PC-9 (cell line): ENCODE measurements at regions of chr7 and their contacts with region 1.

Region 1: GRCh38 chr7:22238354-22239311 is 118.3 kb downstream of the RAPGEF5 start:
- DNase-seq: no peak
- H3K4me3 ChIP-seq: no peak overlapping the region
- H3K27ac ChIP-seq: no peak overlapping the region
- H3K4me1 ChIP-seq: no peaks in the 10 kb centered on the region
- H3K27me3 ChIP-seq: no peaks in the 10 kb centered on the region
- CTCF ChIP-seq: no peak

Region 2: DNA sequence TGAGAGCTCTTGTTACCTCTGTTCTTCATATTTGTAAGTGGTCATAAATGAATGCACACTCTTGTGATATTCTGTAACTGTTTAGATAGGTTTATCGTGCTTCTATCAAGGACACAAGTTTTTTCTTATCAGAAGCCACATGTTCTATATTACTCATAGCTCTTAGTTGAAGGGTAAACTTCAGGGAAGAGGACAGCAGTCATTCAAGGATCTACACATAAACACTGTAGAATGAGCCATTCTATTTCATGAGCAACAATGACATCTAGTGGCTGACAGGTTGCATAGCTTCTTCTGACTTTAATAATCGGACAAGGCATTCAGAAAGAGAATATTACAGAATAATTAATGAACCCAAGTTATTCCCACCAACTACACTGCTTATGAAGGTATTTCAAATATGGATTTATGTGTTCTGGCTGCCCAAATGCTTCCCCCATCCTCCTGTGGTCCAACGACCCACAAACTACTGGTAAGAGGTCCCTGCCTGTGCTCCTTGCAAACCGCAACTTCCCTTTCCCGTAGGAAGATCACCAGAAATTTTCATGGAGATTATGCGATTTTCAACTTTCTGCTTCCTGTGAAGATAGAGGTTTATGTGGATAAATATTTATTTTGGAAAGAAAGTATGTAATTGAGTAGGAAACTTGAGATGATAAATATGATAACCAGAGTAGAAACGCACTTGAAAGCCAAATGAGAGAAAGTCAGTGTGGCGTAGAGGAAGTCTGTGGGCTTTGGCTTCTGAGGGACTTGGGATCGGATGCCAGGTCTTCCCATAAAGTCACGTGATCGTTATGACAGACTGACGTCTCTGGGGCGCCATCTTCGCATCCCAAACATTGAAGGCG is 1639.9 kb before region 1 on chr7:
- CTCF ChIA-PET with region 1: no interaction called
- POLR2A ChIA-PET with region 1: no interaction called
- intact Hi-C with region 1: no loop called
- DNase-seq: peak; percentile 4 to 71
- H3K4me3 ChIP-seq: no peak overlapping the region
- H3K27ac ChIP-seq: no peak overlapping the region
- H3K4me1 ChIP-seq: no peaks in the 10 kb centered on the region; the same call in 1 of the 2 replicates
- H3K27me3 ChIP-seq: no peaks in the 10 kb centered on the region
- CTCF ChIP-seq: peak; percentile 97

Region 3: GRCh38 chr7:21412410-21412851 is 826.2 kb before region 1 on chr7:
- CTCF ChIA-PET with region 1: no interaction called
- POLR2A ChIA-PET with region 1: interaction called, 29 read pairs
- intact Hi-C with region 1: no loop called
- DNase-seq: no peak
- H3K4me3 ChIP-seq: no peak overlapping the region
- H3K27ac ChIP-seq: no peak overlapping the region
- H3K4me1 ChIP-seq: 0 out of 2 replicates have a peak, but pooled peaks cover 11% of the 10 kb centered on the region
- H3K27me3 ChIP-seq: no peaks in the 10 kb centered on the region
- CTCF ChIP-seq: no peak

Region 4: GRCh38 chr7:22121702-22122474 is 116.7 kb before region 1 on chr7:
- CTCF ChIA-PET with region 1: no interaction called
- POLR2A ChIA-PET with region 1: no interaction called
- intact Hi-C with region 1: no loop called
- DNase-seq: no peak
- H3K4me3 ChIP-seq: no peak overlapping the region
- H3K27ac ChIP-seq: no peak overlapping the region
- H3K4me1 ChIP-seq: no peaks in the 10 kb centered on the region
- H3K27me3 ChIP-seq: no peaks in the 10 kb centered on the region
- CTCF ChIP-seq: no peak

Region 5: GRCh38 chr7:22452142-22452959 is 213.7 kb after region 1 on chr7:
- CTCF ChIA-PET with region 1: no interaction called
- POLR2A ChIA-PET with region 1: no interaction called
- intact Hi-C with region 1: loop called (anchors 5 kb)
- DNase-seq: peak in 1 of 2 experiments; percentile 56
- H3K4me3 ChIP-seq: no peak overlapping the region
- H3K27ac ChIP-seq: no peak overlapping the region
- H3K4me1 ChIP-seq: no peaks in the 10 kb centered on the region
- H3K27me3 ChIP-seq: no peaks in the 10 kb centered on the region
- CTCF ChIP-seq: peak; percentile 63